ENCODE measurements at regions of chr11 and their contacts with region 1.

Region 1: DNA sequence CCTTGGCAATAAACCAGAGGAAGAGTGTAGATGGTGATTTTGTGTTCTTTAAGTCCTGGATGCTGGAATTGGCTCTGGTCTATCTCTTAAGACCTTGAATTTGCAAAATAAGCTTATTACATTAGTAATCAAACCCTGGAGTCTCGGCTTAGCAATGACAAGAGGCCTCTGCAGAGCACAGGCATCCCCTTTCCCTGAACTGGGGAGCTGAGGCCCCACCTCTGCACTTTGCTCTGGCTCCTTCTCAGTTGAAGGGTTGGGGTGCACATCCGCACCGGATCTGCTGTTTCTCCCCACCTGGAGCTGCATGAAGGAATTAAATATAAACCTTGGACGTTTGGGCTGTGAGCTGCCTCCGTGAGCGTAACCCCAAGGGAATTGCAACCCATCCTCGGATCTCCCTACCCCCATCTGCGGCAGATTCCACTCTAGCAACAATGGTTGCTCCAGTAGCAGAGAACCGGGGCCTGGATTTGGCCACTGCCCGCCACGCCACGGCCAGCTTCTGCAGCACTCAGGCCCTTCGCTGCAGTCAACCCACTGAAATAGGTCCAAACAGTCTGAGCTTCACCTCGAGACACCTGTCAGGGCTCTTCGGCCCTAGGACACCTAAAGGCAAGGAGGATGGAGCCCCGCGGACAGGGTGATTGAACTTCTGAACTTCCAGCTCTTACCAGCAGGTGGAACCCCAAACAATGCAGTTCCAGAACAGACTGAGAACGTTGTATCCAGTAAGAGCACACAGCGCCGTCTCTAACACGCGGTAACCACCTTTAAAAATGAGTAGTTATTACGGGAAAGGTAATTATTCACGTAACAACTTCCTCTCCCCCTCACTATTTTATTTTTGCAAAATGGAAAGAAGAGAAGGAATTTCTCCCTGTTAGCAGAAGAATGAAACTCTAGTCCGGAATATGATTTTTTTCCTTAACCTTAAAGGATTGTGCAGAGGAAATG is 54.8 kb upstream of the CAPRIN1 start:
- DNase-seq: peak; percentile 77 to 85
- H3K4me3 ChIP-seq: no peak overlapping the region
- H3K4me1 ChIP-seq: peaks cover 12% of the 10 kb centered on the region
- H3K27me3 ChIP-seq: no peaks in the 10 kb centered on the region

Region 2: DNA sequence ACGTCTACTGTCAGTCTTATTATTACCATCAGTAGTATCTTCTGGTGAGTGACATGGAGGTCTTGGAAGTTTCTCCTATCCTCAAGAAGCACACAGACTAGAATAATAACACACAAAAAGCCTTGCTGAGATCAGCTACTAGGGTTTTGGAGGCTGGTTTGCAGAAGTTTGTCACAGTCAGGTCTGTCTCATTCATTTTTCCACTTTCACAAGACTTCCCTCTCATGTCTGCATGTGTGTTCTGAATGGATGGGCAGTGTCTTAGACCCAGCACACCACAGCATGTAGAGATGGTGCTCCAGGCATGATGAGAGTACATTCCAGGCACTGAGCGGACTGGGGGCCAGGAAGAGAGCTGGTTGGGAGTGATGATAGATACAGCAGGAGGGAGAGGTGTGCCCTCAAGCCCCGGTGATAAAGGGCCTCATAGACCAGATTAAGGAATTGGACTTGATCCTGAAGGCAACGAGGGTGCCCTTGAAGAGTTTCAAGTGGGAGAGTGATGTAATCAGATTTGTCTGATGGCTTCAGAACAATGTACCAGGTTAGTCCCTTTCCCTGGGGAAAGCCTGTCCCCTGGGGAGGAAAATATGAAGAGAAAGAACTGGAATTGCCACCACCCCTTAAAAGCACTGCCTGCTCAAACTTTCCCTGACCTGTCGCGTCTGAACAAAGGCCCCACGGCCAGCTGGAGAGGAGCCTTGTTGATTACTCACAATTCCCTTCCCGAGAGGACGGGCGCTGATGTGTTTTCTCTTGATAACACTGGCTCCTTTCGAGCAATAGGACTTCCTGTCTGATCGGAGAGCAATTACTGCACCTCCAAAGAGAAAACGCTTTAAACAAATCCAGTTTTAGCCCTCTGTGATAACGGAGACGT is 59.8 kb before region 1 on chr11:
- in situ Hi-C with region 1: loop called (anchors 10 kb)
- DNase-seq: no peak
- H3K4me3 ChIP-seq: no peak overlapping the region
- H3K4me1 ChIP-seq: no peaks in the 10 kb centered on the region
- H3K27me3 ChIP-seq: no peaks in the 10 kb centered on the region

Measured in HAP-1 (cell line).